T-cell (primary cell): ENCODE measurements at regions of chr13 and their contacts with region 1.

Region 1: GRCh38 chr13:33100886-33101285 is 84.7 kb downstream of the KL start:
- DNase-seq: no peak
- ATAC-seq: no peak
- H3K4me3 ChIP-seq: no peak overlapping the region
- H3K4me3 Mint-ChIP-seq: no peak overlapping the region
- H3K27ac ChIP-seq: no peak overlapping the region
- H3K27ac Mint-ChIP-seq: no peak overlapping the region
- H3K4me1 ChIP-seq: no peaks in the 10 kb centered on the region
- H3K4me1 Mint-ChIP-seq: no peaks in the 10 kb centered on the region
- H3K27me3 ChIP-seq: peaks cover 0 to 5% of the 10 kb centered on the region in 2 experiments
- H3K27me3 Mint-ChIP-seq: peaks cover 10 to 29% of the 10 kb centered on the region in 2 donors

Region 2: GRCh38 chr13:33040090-33040489 is 60.8 kb before region 1 on chr13:
- CTCF ChIA-PET with region 1: no interaction called
- POLR2A ChIA-PET with region 1: no interaction called
- DNase-seq: no peak
- ATAC-seq: no peak
- H3K4me3 ChIP-seq: no peak overlapping the region
- H3K4me3 Mint-ChIP-seq: no peak overlapping the region
- H3K27ac ChIP-seq: no peak overlapping the region
- H3K27ac Mint-ChIP-seq: no peak overlapping the region
- H3K4me1 ChIP-seq: no peaks in the 10 kb centered on the region
- H3K4me1 Mint-ChIP-seq: no peaks in the 10 kb centered on the region
- H3K27me3 ChIP-seq: no peaks in the 10 kb centered on the region
- H3K27me3 Mint-ChIP-seq: peaks cover 4 to 12% of the 10 kb centered on the region in 2 donors

Region 3: DNA sequence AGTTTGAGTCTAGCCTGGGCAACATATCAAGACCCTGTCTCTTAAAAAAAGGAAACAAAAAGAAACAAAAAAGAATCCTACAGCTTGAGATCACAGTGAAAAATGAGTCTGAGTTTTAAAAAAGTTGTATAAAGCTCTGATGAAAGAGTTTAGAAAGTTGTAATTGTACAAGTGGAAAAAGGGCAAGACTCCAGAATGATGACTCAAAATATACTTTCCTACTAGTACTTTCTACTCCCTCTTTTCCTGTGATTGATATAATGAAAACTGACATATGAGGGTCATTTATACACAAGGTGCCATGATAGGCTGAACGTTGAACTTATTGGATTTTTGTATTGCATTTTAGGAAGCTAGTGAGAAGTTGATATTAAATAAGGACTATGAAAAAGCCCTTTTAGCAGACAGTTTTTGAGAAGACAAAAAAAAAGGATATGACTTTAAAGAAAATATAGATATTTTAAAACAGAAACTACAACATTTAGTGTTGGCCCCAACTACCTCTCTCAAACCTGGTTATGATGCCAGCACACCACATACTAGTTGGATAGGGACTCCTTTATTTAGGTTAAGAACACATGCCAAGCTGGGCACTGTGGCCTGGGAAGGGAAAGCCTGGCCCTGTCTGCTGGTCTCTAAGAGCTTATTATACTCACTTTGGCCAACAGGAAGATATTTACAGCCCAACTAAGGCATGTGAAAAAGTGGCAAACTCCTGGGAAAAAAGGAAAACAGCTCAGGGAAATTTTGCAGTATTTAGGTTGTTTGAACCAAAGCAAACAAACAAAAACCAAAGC is 32.0 kb after region 1 on chr13:
- CTCF ChIA-PET with region 1: no interaction called
- POLR2A ChIA-PET with region 1: interaction called in 1 of 2 experiments, 15 read pairs
- DNase-seq: no peak
- ATAC-seq: no peak
- H3K4me3 ChIP-seq: no peak overlapping the region
- H3K4me3 Mint-ChIP-seq: no peak overlapping the region
- H3K27ac ChIP-seq: no peak overlapping the region
- H3K27ac Mint-ChIP-seq: no peak overlapping the region
- H3K4me1 ChIP-seq: no peaks in the 10 kb centered on the region
- H3K4me1 Mint-ChIP-seq: peaks cover 0 to 3% (median 0%) of the 10 kb centered on the region in 3 donors
- H3K27me3 ChIP-seq: no peaks in the 10 kb centered on the region
- H3K27me3 Mint-ChIP-seq: peaks cover 4 to 5% of the 10 kb centered on the region in 2 donors

Region 4: GRCh38 chr13:33183431-33184111 is 82.7 kb after region 1 on chr13:
- CTCF ChIA-PET with region 1: no interaction called
- POLR2A ChIA-PET with region 1: no interaction called
- DNase-seq: no peak
- ATAC-seq: no peak
- H3K4me3 ChIP-seq: no peak overlapping the region
- H3K4me3 Mint-ChIP-seq: no peak overlapping the region
- H3K27ac ChIP-seq: no peak overlapping the region
- H3K27ac Mint-ChIP-seq: no peak overlapping the region
- H3K4me1 ChIP-seq: no peaks in the 10 kb centered on the region
- H3K4me1 Mint-ChIP-seq: peaks cover 0 to 6% (median 0%) of the 10 kb centered on the region in 3 donors
- H3K27me3 ChIP-seq: peaks cover 0 to 3% of the 10 kb centered on the region in 2 experiments
- H3K27me3 Mint-ChIP-seq: peaks cover 28 to 32% of the 10 kb centered on the region in 2 donors